Calu3 (cell line): ENCODE measurements at regions of chr6 and their contacts with region 1.

Region 1: DNA sequence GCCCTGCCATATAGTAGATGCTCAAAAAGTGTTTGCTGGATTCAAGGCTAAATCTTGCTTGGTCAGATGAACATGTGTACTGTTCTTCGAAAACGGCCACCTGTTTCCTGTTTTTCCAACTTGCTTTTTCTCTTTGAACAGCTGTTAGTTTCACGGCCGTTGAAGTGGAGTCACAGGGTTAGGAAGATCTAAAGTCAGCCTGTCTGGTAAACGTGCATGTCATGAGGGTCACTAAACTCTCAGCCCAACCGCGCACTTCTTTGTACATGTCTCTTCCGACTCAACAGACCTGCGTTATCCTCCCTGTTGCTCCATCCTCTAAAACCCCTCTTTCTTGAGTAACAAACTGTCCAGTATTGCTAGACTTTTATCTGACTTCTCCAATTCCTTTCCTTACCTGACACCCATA is 93.2 kb upstream of the MAN1A1 start:
- DNase-seq: no peak
- H3K4me3 Mint-ChIP-seq: no peak overlapping the region
- H3K27ac Mint-ChIP-seq: no peak overlapping the region
- H3K4me1 Mint-ChIP-seq: peaks cover 31% of the 10 kb centered on the region
- H3K27me3 Mint-ChIP-seq: no peaks in the 10 kb centered on the region
- CTCF ChIP-seq: no peak

Region 2: GRCh38 chr6:119349323-119350042 is 93.3 kb before region 1 on chr6 and contains the start of gene MAN1A1:
- CTCF ChIA-PET with region 1: no interaction called
- intact Hi-C with region 1: loop called (anchors 10 kb)
- DNase-seq: peak; percentile 85
- H3K4me3 Mint-ChIP-seq: peak within 1 kb of the TSS; percentile 77
- H3K27ac Mint-ChIP-seq: peak within 1 kb of the TSS; percentile 49
- H3K4me1 Mint-ChIP-seq: peaks cover 24% of the 10 kb centered on the region
- H3K27me3 Mint-ChIP-seq: no peaks in the 10 kb centered on the region
- CTCF ChIP-seq: no peak
- total RNA-seq, gene MAN1A1: 13.3 and 13.7 TPM in 2 replicates

Region 3: DNA sequence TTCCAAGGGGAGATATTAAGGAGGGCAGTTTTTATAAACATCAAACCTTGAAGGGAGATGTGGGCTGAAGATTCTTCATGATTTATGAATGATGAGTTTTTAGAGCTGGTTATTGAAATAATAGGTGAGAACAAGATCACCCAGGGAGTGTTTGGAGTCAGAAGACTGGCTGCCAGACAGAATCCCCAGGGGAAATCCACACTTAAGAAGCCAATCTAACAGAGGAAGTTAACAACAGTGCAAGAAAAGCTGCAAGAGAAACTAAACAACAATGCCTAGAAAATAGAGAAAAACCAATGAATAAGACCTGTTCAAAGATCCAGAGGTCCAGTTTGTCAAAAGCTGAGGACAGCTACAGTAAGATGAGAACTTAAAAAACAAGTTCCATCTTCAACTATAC is 74.6 kb after region 1 on chr6:
- CTCF ChIA-PET with region 1: no interaction called
- intact Hi-C with region 1: loop called (anchors 5 kb)
- DNase-seq: no peak
- H3K4me3 Mint-ChIP-seq: no peak overlapping the region
- H3K27ac Mint-ChIP-seq: peak overlapping the region; percentile 5
- H3K4me1 Mint-ChIP-seq: peaks cover 15% of the 10 kb centered on the region
- H3K27me3 Mint-ChIP-seq: no peaks in the 10 kb centered on the region
- CTCF ChIP-seq: no peak